ENCODE measurements at regions of chr12 and their contacts with region 1.

Region 1: DNA sequence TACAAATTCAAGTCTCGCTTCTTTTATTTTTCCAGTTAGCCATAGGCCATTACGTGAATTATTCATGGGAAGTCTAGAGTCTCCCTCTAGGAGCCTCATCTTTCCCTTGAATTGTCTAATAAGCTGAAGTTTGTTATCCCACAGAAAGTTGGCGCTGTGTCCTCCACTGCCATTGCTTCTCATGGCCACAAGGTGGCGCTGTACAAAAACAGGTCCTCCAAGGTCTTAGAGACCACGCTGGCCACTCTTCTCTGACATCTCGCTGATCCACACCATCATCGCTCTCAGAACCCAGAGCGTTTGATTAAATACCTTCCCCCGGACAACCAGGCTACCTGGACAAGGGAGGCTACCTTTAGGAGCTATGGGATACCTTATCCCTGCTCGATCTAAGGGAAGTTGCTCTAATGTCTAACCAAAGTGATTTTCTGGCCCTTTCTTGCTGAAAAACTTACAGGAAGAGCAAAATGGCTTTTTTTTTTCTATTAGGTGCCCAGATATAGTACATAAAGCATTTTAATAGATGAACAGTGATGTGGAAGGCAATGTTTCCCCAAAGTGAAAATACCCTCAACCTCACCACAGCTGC is 110.0 kb downstream of the CCDC60 start:
- DNase-seq: peak; percentile 28
- ATAC-seq: peak; percentile 89
- H3K4me3 ChIP-seq: no peak overlapping the region
- H3K27ac ChIP-seq: no peak overlapping the region
- H3K4me1 ChIP-seq: no peaks in the 10 kb centered on the region
- H3K27me3 ChIP-seq: peaks cover 0 to 3% of the 10 kb centered on the region in 2 experiments; a peak in 1 of 4 replicates
- CTCF ChIP-seq: peak; percentile 95 to 99 (median 98); a peak in 5 of 6 replicates
- EP300 ChIP-seq: no peak
- POLR2A ChIP-seq: no peak
- RAD21 ChIP-seq: peak; percentile 63

Region 2: GRCh38 chr12:119432949-119433348 is 11.6 kb before region 1 on chr12:
- CTCF ChIA-PET with region 1: interaction called, 31 read pairs
- POLR2A ChIA-PET with region 1: no interaction called
- RAD21 ChIA-PET with region 1: no interaction called
- SMC1A ChIA-PET with region 1: interaction called, 4 read pairs
- in situ Hi-C with region 1: no loop called
- intact Hi-C with region 1: no loop called
- DNase-seq: no peak
- ATAC-seq: no peak
- H3K4me3 ChIP-seq: no peak overlapping the region
- H3K27ac ChIP-seq: no peak overlapping the region
- H3K4me1 ChIP-seq: no peaks in the 10 kb centered on the region
- H3K27me3 ChIP-seq: no peaks in the 10 kb centered on the region
- CTCF ChIP-seq: no peak
- EP300 ChIP-seq: no peak
- POLR2A ChIP-seq: no peak
- RAD21 ChIP-seq: no peak

Region 3: DNA sequence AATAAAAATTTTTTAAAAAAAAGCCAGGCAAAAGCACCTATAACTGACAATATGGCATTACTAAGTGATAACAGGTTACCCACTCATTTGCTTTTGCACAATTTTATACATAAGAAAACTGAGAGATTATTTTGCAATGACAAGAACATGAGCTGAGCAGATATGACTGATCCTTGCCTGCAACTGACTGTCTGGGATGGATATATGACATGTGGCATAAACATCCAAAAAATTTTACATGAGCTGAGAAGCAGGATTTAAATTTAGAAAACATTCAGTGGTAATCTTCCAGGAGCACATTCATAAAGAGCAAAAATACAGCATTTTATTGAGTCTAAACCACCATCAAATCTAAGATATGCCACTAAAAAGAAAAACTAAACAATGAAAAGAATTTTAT is 23.7 kb after region 1 on chr12:
- CTCF ChIA-PET with region 1: no interaction called
- POLR2A ChIA-PET with region 1: no interaction called
- RAD21 ChIA-PET with region 1: no interaction called
- SMC1A ChIA-PET with region 1: no interaction called
- in situ Hi-C with region 1: no loop called
- intact Hi-C with region 1: no loop called
- DNase-seq: no peak
- ATAC-seq: no peak
- H3K4me3 ChIP-seq: no peak overlapping the region
- H3K27ac ChIP-seq: no peak overlapping the region
- H3K4me1 ChIP-seq: no peaks in the 10 kb centered on the region
- H3K27me3 ChIP-seq: no peaks in the 10 kb centered on the region
- CTCF ChIP-seq: no peak
- EP300 ChIP-seq: no peak
- POLR2A ChIP-seq: no peak
- RAD21 ChIP-seq: no peak

Region 4: GRCh38 chr12:119544765-119545625 is 100.4 kb after region 1 on chr12:
- CTCF ChIA-PET with region 1: interaction called, 43 read pairs
- POLR2A ChIA-PET with region 1: no interaction called
- RAD21 ChIA-PET with region 1: interaction called, 11 read pairs
- SMC1A ChIA-PET with region 1: interaction called, 16 read pairs
- in situ Hi-C with region 1: loop called (anchors 5 kb)
- intact Hi-C with region 1: loop called (anchors 1 kb)
- DNase-seq: peak; percentile 8
- ATAC-seq: peak; percentile 89
- H3K4me3 ChIP-seq: no peak overlapping the region
- H3K27ac ChIP-seq: no peak overlapping the region
- H3K4me1 ChIP-seq: no peaks in the 10 kb centered on the region
- H3K27me3 ChIP-seq: no peaks in the 10 kb centered on the region; a peak in 1 of 4 replicates
- CTCF ChIP-seq: peak; percentile 72 to 89 (median 79)
- EP300 ChIP-seq: no peak
- POLR2A ChIP-seq: no peak
- RAD21 ChIP-seq: peak; percentile 81

Region 5: DNA sequence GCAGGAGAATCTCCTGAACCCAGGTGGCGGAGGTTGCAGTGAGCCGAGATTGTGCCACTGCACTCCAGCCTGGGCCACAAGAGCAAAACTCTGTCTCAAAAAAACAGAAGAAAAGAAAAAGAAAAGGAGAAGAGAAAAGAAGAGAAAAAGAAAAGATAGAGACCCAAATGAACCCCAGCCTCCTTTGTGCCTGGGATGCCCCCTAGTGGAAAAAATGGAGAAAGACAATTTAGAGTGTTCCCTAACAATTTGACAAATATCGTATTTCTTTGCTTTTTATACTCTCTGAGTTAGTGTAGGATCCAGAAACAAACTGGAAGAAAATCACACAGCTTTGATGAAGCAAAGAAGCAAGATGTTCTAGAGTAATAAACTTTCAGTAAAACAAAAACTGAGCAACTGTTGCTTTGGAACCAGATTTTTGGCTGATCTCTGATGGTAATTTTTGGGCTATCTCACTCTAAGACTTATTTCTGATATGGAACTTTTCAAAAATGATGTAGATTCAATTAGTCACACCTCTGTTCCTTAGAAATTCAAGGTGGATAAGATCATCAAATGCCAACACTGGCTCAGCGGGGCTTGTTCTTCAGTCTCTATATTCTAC is 204.8 kb after region 1 on chr12:
- CTCF ChIA-PET with region 1: interaction called, 14 read pairs
- POLR2A ChIA-PET with region 1: no interaction called
- RAD21 ChIA-PET with region 1: interaction called, 3 read pairs
- SMC1A ChIA-PET with region 1: no interaction called
- in situ Hi-C with region 1: loop called (anchors 5 kb)
- intact Hi-C with region 1: loop called (anchors 5 kb)
- DNase-seq: no peak
- ATAC-seq: no peak
- H3K4me3 ChIP-seq: no peak overlapping the region
- H3K27ac ChIP-seq: no peak overlapping the region
- H3K4me1 ChIP-seq: no peaks in the 10 kb centered on the region
- H3K27me3 ChIP-seq: no peaks in the 10 kb centered on the region
- CTCF ChIP-seq: peak; percentile 61 to 69 (median 62)
- EP300 ChIP-seq: no peak
- POLR2A ChIP-seq: no peak
- RAD21 ChIP-seq: peak; percentile 67

Region 6: DNA sequence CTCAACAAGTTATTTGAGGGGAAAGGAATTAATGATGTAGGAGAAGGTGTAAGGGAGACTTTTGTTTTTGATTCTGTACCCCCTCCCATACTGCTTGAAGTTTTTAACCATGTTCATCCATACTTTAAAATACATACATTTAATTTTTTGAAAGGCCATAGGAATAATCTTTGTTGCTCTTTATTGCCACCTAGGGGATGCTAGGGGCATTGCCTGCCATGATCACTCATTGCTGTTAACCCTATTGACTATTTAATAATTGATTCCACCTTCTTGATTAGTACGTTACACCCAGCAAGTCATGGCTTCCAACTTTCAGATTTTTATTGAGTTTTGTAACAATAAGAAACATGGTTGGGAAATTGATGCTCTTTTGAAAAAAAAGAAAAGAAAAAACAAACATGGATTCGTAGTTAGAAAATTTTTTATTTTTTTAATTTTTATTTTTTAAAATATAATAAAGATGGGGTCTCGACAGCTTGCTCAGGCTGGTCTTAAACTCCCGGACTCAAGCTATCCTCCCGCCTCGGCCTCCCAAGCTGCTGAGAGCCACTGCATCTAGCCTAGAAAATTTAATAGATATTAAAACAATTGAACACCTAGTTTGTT is 214.8 kb after region 1 on chr12:
- CTCF ChIA-PET with region 1: interaction called, 15 read pairs
- POLR2A ChIA-PET with region 1: no interaction called
- RAD21 ChIA-PET with region 1: interaction called, 3 read pairs
- SMC1A ChIA-PET with region 1: no interaction called
- in situ Hi-C with region 1: no loop called
- intact Hi-C with region 1: no loop called
- DNase-seq: no peak
- ATAC-seq: peak; percentile 87
- H3K4me3 ChIP-seq: no peak overlapping the region
- H3K27ac ChIP-seq: no peak overlapping the region
- H3K4me1 ChIP-seq: no peaks in the 10 kb centered on the region
- H3K27me3 ChIP-seq: no peaks in the 10 kb centered on the region
- CTCF ChIP-seq: peak; percentile 82 to 90 (median 90)
- EP300 ChIP-seq: no peak
- POLR2A ChIP-seq: no peak
- RAD21 ChIP-seq: peak; percentile 42

Region 7: DNA sequence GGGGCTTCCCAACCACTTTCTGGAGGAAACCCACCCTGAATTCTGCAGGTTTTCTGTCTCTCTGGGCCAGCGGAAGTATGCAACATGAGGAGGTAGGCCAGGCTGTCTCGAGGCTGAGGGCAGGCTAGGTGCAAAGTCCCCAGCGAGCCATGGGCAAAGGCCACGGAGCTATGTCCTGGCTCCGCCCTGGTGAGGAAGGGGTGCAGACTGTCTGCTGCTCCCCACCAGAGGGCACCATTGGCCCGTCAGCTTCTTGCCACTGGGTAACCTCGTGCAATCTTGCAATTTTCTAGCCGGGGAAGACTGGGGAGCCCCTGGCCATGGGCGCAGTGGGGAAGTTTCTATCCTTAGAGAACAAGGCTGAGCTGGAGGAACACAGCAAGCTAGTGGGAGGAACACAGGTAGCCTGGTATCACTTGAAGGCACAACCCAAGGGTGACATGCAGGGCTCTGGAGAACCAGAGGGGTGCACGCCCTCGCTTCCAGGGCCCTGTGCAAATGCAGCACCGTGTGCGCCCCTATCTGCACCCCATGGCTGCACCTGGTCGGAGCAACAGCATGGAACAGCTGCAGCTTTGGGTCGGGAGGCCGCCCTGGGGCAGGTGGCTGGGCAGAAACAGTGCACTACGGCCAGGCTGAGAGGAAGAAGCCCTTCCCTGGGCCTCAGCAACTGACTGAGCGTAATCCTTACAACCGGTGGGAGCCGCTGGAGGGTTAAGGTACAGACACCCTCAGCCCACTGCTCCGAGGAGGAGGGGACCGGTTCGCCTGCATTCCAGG is 783.9 kb after region 1 on chr12:
- CTCF ChIA-PET with region 1: no interaction called
- POLR2A ChIA-PET with region 1: no interaction called
- RAD21 ChIA-PET with region 1: no interaction called
- SMC1A ChIA-PET with region 1: no interaction called
- in situ Hi-C with region 1: no loop called
- intact Hi-C with region 1: no loop called
- DNase-seq: peak; percentile 49
- ATAC-seq: peak; percentile 98
- H3K4me3 ChIP-seq: no peak overlapping the region
- H3K27ac ChIP-seq: no peak overlapping the region
- H3K4me1 ChIP-seq: peaks cover 32% of the 10 kb centered on the region
- H3K27me3 ChIP-seq: no peaks in the 10 kb centered on the region
- CTCF ChIP-seq: peak; percentile 94 to 97 (median 96)
- EP300 ChIP-seq: no peak
- POLR2A ChIP-seq: no peak
- RAD21 ChIP-seq: peak; percentile 96